HCT116 (cell line): ENCODE measurements at regions of chr20 and their contacts with region 1.

Region 1: GRCh38 chr20:62136283-62137091 is 6.7 kb downstream of the PSMA7 start:
- DNase-seq: peak; percentile 44
- ATAC-seq: peak; percentile 79
- H3K4me3 ChIP-seq: no peak overlapping the region
- H3K27ac ChIP-seq: no peak overlapping the region; the same call in 1 of the 2 replicates
- H3K4me1 ChIP-seq: peaks cover 3 to 4% of the 10 kb centered on the region in 2 experiments
- H3K27me3 ChIP-seq: no peaks in the 10 kb centered on the region
- CTCF ChIP-seq: peak; percentile 82 to 96 (median 95)
- POLR2A ChIP-seq: no peak
- RAD21 ChIP-seq: peak; percentile 78

Region 2: DNA sequence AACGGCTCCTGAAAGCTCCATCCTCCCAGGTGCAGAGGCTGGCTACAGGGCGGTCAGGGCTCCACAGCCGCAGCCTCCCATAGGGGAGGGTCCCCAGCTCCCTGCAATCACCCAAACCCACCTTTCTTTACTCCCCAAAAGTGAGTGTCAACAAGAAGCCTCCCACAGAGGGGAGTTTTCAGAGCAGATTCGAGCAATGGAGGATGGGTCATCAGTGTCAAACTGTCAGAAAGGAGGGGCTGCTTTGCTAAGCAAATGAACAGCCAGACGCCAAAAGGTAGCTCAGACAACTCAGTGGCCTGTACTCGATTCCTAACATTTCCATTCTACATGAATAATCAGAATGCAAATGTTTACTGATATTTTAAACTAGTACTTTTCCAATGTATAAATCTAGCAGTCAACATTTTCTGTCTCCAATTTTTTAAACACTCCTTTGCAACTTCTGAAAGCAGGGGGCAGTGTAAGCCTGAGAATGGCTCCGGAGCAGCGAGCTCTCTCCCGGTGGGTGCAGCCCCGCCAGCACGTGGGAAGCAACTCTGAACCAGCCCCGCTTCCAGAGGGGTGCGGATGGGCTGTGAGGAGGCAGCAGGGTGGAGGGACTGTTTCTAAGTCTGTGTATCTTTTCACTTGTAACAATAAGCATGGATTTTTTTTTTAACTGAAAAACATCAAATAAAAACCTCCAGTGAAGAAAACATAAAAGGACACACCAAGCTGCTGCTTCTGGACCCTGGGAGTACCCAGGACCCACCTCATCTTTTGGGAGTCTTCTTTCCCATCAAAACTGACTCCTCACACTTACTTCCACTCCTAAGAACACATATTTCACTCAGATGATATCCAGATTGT is 125.7 kb before region 1 on chr20:
- CTCF ChIA-PET with region 1: interaction called, 24 read pairs
- POLR2A ChIA-PET with region 1: interaction called, 5 read pairs
- RAD21 ChIA-PET with region 1: no interaction called
- intact Hi-C with region 1: loop called (anchors 1 kb)
- DNase-seq: peak; percentile 10
- ATAC-seq: peak; percentile 82
- H3K4me3 ChIP-seq: no peak overlapping the region
- H3K27ac ChIP-seq: no peak overlapping the region
- H3K4me1 ChIP-seq: no peaks in the 10 kb centered on the region
- H3K27me3 ChIP-seq: no peaks in the 10 kb centered on the region
- CTCF ChIP-seq: peak; percentile 57 to 81 (median 74); a peak in 5 of 6 replicates
- POLR2A ChIP-seq: no peak
- RAD21 ChIP-seq: peak; percentile 88

Region 3: DNA sequence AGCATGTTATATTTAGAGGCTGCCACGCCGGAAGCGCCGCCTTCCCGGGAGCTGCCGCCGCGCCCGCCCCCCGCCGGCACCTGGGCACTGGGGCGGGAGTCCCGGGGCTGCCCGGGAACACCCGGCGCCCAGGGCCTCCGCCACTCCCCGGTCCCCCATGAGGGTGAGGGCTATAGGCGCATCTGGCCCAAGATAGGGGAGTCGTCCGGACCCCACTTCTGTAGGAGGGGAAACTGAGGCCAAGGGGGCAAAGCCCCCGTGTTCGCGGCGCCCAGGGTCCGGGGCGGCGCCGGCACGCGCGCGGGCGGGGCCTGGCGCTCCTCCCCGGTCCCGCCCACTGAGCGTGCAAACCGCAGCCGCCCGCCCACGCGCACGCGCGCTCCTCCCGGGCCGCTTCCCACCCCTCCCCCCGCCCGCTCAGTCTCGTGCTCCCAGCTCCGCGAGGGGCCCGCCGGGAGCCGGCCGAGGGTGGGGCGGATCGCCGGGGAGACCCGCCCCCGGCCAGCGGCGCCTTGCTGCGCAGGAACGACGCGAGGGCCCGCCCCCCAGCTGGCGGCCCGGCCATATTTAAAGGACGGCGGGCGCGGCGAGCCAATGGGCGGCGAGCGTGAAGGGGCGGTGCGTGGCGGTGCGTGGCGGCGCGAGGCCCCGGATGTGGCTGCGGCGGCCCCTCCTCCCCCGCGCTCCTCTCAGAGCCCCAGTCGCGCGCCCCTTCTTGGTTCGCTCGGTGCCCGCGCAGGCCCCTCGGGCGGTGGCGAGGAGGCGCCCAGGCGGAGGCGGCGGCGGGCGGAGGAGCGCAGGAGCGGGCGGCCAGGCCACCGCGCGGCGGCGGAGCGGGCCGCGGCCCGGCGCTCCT is 14.5 kb before region 1 on chr20 and contains the start of gene LSM14B:
- CTCF ChIA-PET with region 1: interaction called, 4 read pairs
- POLR2A ChIA-PET with region 1: interaction called, 10 read pairs
- RAD21 ChIA-PET with region 1: no interaction called
- intact Hi-C with region 1: no loop called
- DNase-seq: peak; percentile 89
- ATAC-seq: peak; percentile 86
- H3K4me3 ChIP-seq: peak within 1 kb of the TSS; percentile 53 to 75
- H3K27ac ChIP-seq: peak within 1 kb of the TSS; percentile 97
- H3K4me1 ChIP-seq: peaks cover 12 to 26% of the 10 kb centered on the region in 2 experiments
- H3K27me3 ChIP-seq: no peaks in the 10 kb centered on the region
- CTCF ChIP-seq: no peak
- POLR2A ChIP-seq: peak; percentile 10
- RAD21 ChIP-seq: no peak
- total RNA-seq, gene LSM14B: 51.3 TPM

Region 4: DNA sequence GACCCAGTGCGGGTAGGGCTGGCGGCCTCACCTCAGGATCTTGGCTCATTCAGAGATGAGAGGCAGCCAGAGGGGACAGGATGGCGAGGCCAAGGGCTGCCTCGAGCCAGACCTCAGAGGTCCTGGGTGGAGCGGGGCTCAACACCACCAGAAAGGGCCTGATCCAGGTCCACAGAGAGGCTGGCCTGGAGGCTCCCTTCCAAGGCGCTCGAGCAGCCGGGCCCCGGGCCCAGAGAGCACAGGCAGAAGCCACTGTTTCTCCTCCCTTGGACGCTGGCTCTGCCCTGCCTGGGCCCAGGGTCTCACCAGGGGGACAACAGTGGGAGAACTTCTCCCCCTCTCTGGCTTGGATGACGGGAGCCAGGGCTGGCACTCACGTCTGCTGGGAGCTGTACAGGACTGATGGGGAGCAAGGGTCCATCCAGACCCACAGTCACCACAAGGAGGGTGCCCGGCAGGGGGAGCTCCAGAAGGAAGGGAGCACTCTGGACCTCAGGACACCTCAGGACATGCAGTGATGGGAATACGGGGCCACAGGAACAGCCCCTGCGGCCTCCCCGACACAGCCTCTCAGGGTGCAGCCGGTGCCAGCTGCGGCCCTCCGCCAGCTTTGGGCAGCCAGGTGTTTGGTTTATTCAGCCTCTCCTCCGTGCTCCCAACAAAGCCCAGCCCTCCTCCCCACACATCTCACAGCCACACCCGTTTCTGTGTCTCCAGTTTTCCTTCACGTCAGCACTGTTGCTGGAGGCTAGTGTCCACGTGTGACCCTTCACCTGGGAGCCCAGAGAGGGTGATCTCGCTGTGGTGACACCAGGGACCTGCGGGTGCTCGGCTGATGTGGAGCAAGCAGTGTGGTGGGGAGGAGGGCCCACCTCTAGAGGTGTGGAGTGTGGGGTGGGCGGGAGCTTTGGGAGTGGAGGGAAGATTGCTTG is 259.1 kb after region 1 on chr20:
- CTCF ChIA-PET with region 1: no interaction called
- POLR2A ChIA-PET with region 1: no interaction called
- RAD21 ChIA-PET with region 1: no interaction called
- intact Hi-C with region 1: no loop called
- DNase-seq: no peak
- ATAC-seq: peak; percentile 67
- H3K4me3 ChIP-seq: no peak overlapping the region
- H3K27ac ChIP-seq: no peak overlapping the region
- H3K4me1 ChIP-seq: no peaks in the 10 kb centered on the region
- H3K27me3 ChIP-seq: no peaks in the 10 kb centered on the region
- CTCF ChIP-seq: peak in 2 of 3 experiments; percentile 40 to 45; a peak in 4 of 6 replicates
- POLR2A ChIP-seq: no peak
- RAD21 ChIP-seq: no peak

Region 5: GRCh38 chr20:62571667-62572344 is 435.3 kb after region 1 on chr20:
- CTCF ChIA-PET with region 1: no interaction called
- POLR2A ChIA-PET with region 1: no interaction called
- RAD21 ChIA-PET with region 1: no interaction called
- intact Hi-C with region 1: no loop called
- DNase-seq: peak; percentile 35
- ATAC-seq: peak; percentile 87
- H3K4me3 ChIP-seq: no peak overlapping the region
- H3K27ac ChIP-seq: no peak overlapping the region
- H3K4me1 ChIP-seq: peaks cover 3 to 5% of the 10 kb centered on the region in 2 experiments; a peak in 2 of 4 replicates
- H3K27me3 ChIP-seq: peaks cover 8% of the 10 kb centered on the region; the same call in 1 of the 2 replicates
- CTCF ChIP-seq: peak in 1 of 3 experiments; percentile 14; a peak in 1 of 6 replicates
- POLR2A ChIP-seq: no peak
- RAD21 ChIP-seq: no peak